Left colon (tissue), 2 donors: ENCODE measurements at regions of chr2 and their contacts with region 1.

Region 1: DNA sequence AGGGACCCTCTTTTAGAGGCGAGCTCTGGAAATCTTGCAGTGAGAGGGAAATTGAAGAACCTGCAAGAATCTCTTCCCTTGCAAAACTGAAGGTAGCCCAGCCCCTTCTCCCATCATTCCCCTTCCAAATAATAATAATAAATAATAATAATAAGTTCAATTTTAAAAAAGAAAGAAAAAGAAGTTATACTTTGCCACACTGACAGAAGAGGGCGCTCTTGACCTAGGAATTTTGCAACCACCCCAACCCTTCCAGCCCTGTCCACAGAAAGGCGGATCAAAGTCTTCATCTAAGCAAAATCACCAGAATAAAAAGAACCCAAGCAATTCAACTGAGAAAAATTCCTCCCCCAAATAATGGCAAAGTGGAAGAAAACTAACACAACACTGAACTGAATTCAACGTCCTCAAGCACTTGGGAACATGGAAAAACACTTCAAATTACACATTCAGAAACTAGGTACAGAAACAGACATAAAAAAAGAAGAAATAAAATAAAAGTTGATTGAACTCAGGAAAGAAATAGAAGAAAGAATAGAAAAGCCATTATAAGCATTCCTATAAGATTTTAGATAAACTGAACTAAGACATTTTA is 98.9 kb upstream of the GLS start:
- DNase-seq: peak in 1 of 2 donors; percentile 43
- ATAC-seq: peak; percentile 69

Region 2: DNA sequence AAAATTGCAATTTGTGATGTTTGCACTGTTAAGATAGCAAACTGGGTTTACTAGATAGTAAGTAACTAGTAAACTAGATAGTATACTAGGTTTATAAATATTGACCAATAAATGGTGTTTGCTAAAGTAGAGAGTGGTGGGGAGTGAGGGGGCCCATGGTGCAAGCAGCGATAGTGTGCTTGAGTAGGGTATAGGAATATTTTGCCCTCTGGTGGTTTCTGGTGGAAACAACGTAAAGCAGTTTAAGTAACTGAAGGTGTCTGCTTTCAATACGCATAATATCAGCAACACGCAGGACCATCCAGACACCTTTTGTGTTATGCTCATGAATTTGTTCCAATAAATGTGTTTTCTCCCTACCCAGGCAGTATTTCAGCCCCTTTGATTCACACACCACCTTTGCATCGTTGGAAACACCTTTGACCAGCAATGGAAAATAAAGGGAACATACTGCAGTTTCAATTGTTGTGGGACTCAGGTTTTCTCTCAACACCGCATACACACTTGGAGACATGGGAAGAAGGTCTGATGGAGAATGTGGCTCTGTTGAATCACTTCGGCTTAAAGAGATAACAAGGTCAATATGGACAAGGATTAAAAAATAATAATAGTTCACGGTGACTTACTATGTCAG is 248.9 kb after region 1 on chr2:
- intact Hi-C with region 1: loop called in 1 of 2 experiments (anchors 5 kb)
- DNase-seq: no peak
- ATAC-seq: peak; percentile 67